A549 (cell line): ENCODE measurements at regions of chr2 and their contacts with region 1.

Region 1: DNA sequence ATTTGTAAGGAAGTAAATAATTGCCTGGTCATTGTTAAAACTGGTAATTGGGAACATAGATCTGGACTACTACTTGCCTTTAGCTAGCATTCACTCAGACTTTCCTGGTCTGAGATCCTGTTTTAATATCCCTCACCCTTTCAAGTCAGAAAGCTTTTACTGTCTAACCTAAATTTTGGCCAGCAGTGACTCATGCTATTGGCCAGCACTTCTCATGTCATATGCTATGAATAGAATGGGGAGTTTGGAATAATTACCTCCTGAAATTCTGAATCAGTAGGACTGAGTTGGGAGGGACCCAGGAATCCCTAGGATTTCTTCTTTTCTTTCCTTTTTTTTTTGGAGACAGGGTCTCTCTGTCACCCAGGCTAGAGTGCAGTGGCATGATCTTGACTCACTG is 19.3 kb downstream of the STK36 start:
- DNase-seq: no peak
- ATAC-seq: no peak
- H3K4me3 ChIP-seq: no peak overlapping the region
- H3K27ac ChIP-seq: no peak overlapping the region
- H3K4me1 ChIP-seq: no peaks in the 10 kb centered on the region
- CTCF ChIP-seq: no peak
- EP300 ChIP-seq: no peak
- POLR2A ChIP-seq: no peak
- RAD21 ChIP-seq: no peak

Region 2: DNA sequence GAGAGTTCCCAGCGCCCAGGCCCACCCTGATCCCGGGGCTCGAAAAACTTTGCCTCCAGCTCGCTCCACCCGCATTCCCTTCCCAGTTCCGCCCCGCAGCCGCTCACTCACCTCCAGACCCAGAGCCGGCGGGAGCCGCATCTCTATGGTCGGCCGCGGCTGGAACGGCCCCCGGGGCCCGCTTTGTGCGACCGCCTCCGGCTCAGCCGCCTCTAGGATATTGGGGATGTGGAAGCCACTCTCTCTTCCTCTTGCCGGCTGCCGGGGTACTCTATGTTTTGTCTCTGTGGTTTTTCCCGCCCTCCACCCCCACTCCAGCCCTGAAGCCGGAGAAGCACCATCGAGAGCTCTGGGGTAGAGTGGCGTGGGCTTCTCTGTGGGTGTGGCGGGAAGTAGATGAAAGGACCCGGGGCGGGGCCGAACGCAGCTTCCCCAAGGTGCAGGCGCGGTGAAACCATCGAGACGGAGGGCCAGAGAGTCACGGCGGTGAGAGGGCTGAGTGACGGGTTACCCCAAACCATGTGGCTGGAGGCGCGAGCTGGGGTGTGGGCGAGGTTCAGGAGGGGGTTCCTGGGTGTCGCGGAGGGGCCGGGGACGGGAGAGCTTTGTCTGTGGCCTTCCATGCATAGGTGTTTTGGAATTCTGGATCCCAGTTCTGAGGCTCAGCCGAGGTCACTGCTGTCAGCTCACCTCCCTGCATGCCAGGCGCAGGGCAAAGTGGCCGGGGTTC is 31.8 kb before region 1 on chr2 and contains the starts of genes BCS1L and ZNF142:
- CTCF ChIA-PET with region 1: interaction called, 13 read pairs
- POLR2A ChIA-PET with region 1: interaction called, 5 read pairs
- DNase-seq: peak; percentile 90 to 92
- ATAC-seq: peak; percentile 94 to 96
- H3K4me3 ChIP-seq: peak within 1 kb of the TSS; percentile 77
- H3K27ac ChIP-seq: peak within 1 kb of the TSS; percentile 93 to 95
- H3K4me1 ChIP-seq: peaks cover 14% of the 10 kb centered on the region; the same call in 2 of the 3 replicates
- CTCF ChIP-seq: no peak
- EP300 ChIP-seq: no peak
- POLR2A ChIP-seq: peak; percentile 91
- RAD21 ChIP-seq: no peak
- polyA plus RNA-seq, gene BCS1L: 47.1 and 47.2 TPM in 2 replicates
- polyA plus RNA-seq, gene ZNF142: 6.3 and 9.5 TPM in 2 replicates

Region 3: DNA sequence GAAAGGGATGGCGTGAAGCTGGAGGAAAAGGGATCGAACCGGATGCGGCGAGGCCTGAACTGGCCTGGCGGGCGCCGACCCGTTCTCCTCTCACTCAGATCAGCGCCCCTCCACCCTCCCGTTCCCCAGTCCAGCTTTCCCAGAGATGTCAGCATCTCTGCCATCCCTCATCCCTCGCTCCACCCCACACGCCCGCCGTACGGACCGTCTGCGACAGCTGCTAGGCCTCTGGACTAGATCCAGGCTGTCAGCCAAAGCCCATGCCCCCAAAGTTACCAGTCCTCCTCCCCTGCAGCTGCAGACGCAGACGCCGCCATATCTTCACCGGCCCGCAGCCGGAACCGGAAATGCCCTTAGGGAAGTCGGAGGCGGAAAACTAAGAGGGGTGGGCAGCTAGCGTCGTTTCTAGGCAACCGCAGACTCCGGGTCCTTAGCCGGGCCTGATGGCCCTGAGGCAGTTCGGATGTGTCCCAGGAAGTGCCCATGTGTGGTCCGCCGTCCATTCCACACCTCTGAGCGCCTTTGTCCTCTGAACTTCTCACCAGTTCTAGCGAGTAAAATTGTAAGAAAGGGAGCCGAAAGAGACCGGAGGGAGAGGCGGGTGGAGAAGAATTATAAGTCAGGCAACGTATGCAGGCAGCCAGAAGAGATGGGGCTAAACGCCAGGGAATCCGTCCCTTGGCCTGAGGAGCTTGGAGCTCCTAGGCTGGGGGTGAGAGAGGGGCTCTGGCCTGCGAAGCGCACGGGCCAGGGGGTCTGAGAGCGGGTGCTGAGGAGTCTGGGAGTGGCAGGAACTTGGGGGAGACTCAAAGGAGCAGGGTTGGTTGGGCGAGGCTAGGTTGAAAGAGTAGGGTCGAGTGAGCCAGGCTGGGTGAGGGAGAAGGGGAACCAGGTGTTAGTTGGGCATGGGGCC is 19.3 kb before region 1 on chr2 and contains the starts of genes RNF25 and STK36:
- CTCF ChIA-PET with region 1: interaction called, 26 read pairs
- POLR2A ChIA-PET with region 1: interaction called, 3 read pairs
- DNase-seq: peak; percentile 84 to 88
- ATAC-seq: peak; percentile 99
- H3K4me3 ChIP-seq: peak within 1 kb of the TSS; percentile 87
- H3K27ac ChIP-seq: peak within 1 kb of the TSS; percentile 84 to 90
- H3K4me1 ChIP-seq: peaks cover 11% of the 10 kb centered on the region; the same call in 2 of the 3 replicates
- CTCF ChIP-seq: no peak
- EP300 ChIP-seq: no peak
- POLR2A ChIP-seq: peak; percentile 88
- RAD21 ChIP-seq: no peak
- polyA plus RNA-seq, gene RNF25: 61.5 and 74.0 TPM in 2 replicates
- polyA plus RNA-seq, gene STK36: 29.9 and 40.8 TPM in 2 replicates

Region 4: DNA sequence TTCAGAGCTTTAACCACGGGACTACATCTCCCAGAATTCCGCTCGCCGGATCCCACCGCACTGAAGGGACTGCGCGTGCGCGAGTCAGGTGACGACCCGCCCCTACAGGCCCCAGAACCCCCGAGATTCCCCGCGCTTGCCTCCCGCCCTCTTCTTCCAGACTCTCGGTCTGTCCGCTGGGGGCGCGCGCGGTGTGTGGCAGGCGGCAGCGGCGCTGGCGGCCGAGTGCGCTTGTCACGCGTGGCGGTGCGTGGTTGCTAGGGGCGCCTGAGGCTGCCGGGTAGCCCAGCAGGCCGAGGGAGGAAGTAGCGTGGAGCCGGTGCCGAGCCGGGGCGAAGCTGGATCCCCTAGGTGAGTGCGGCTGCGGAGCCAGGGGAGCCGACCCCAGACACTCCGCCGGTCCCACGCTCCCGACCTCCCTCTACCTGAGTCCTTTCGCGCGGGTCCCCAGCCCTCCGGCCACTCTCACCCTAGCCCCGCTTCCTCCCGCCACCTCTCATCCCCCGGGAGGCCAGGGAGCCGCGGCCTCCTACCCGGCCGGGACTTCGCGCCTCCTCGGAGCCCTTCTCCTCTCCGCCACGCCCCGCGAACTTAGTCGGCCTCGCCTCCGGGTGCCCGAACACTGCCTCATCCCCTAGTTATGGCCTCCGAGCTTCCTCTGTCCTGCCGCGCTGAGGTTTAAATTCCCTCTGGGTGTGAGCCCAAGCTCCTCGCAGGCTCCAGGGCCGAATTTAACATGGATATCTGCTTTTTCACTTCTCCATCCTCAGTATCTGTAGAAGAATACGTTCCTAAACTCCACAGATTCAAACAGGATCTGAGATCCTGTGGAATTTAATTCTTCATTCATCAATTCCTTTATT is 19.7 kb after region 1 on chr2 and contains the start of gene TTLL4:
- CTCF ChIA-PET with region 1: interaction called, 19 read pairs
- POLR2A ChIA-PET with region 1: interaction called, 3 read pairs
- DNase-seq: peak; percentile 95
- ATAC-seq: peak; percentile 97
- H3K4me3 ChIP-seq: peak within 1 kb of the TSS; percentile 93
- H3K27ac ChIP-seq: peak within 1 kb of the TSS; percentile 95 to 98
- H3K4me1 ChIP-seq: peaks cover 10% of the 10 kb centered on the region; the same call in 2 of the 3 replicates
- CTCF ChIP-seq: peak; percentile 74
- EP300 ChIP-seq: no peak
- POLR2A ChIP-seq: peak; percentile 87
- RAD21 ChIP-seq: peak; percentile 58 to 73
- polyA plus RNA-seq, gene TTLL4: 26.2 and 37.0 TPM in 2 replicates